Activated CD4-positive, alpha-beta T cell treated with anti-CD3 and anti-CD28 coated beads for 36 hours (primary cell): ENCODE measurements at regions of chr12 and their contacts with region 1.

Region 1: GRCh38 chr12:12266873-12267741 is at the start of gene LRP6:
- DNase-seq: peak; percentile 90
- ATAC-seq: peak; percentile 95
- H3K4me3 Mint-ChIP-seq: peak within 1 kb of the TSS; percentile 82
- H3K27ac Mint-ChIP-seq: peak within 1 kb of the TSS; percentile 79
- H3K4me1 Mint-ChIP-seq: peaks cover 24% of the 10 kb centered on the region
- H3K27me3 Mint-ChIP-seq: peaks cover 7% of the 10 kb centered on the region
- total RNA-seq, gene LRP6: 6.8 to 8.2 TPM

Region 2: GRCh38 chr12:11553871-11554533 is 713.1 kb before region 1 on chr12:
- CTCF ChIA-PET with region 1: no interaction called
- POLR2A ChIA-PET with region 1: no interaction called
- intact Hi-C with region 1: loop called in 1 of 2 experiments (anchors 5 kb)
- DNase-seq: peak; percentile 76
- ATAC-seq: peak; percentile 79
- H3K4me3 Mint-ChIP-seq: no peak overlapping the region
- H3K27ac Mint-ChIP-seq: no peak overlapping the region
- H3K4me1 Mint-ChIP-seq: peaks cover 28% of the 10 kb centered on the region
- H3K27me3 Mint-ChIP-seq: no peaks in the 10 kb centered on the region

Region 3: GRCh38 chr12:12823292-12823691 is 556.2 kb after region 1 on chr12:
- CTCF ChIA-PET with region 1: no interaction called
- POLR2A ChIA-PET with region 1: no interaction called
- intact Hi-C with region 1: no loop called
- DNase-seq: no peak
- ATAC-seq: no peak
- H3K4me3 Mint-ChIP-seq: no peak overlapping the region
- H3K27ac Mint-ChIP-seq: peak overlapping the region; percentile 1
- H3K4me1 Mint-ChIP-seq: peaks cover 28% of the 10 kb centered on the region
- H3K27me3 Mint-ChIP-seq: no peaks in the 10 kb centered on the region